Activated CD8-positive, alpha-beta T cell treated with anti-CD3 and anti-CD28 coated beads for 36 hours (primary cell): ENCODE measurements at regions of chr17 and their contacts with region 1.

Region 1: GRCh38 chr17:77451245-77451893 is 310.6 kb downstream of the SEC14L1 start:
- DNase-seq: peak; percentile 84
- ATAC-seq: peak; percentile 19
- H3K4me3 Mint-ChIP-seq: peak overlapping the region; percentile 84
- H3K27ac Mint-ChIP-seq: peak overlapping the region; percentile 96
- H3K4me1 Mint-ChIP-seq: peaks cover 30% of the 10 kb centered on the region
- H3K27me3 Mint-ChIP-seq: no peaks in the 10 kb centered on the region
- CTCF ChIP-seq: no peak

Region 2: GRCh38 chr17:77254951-77255825 is 196.2 kb before region 1 on chr17:
- CTCF ChIA-PET with region 1: no interaction called
- POLR2A ChIA-PET with region 1: no interaction called
- intact Hi-C with region 1: no loop called
- DNase-seq: no peak
- ATAC-seq: no peak
- H3K4me3 Mint-ChIP-seq: no peak overlapping the region
- H3K27ac Mint-ChIP-seq: no peak overlapping the region
- H3K4me1 Mint-ChIP-seq: no peaks in the 10 kb centered on the region
- H3K27me3 Mint-ChIP-seq: no peaks in the 10 kb centered on the region
- CTCF ChIP-seq: no peak

Region 3: DNA sequence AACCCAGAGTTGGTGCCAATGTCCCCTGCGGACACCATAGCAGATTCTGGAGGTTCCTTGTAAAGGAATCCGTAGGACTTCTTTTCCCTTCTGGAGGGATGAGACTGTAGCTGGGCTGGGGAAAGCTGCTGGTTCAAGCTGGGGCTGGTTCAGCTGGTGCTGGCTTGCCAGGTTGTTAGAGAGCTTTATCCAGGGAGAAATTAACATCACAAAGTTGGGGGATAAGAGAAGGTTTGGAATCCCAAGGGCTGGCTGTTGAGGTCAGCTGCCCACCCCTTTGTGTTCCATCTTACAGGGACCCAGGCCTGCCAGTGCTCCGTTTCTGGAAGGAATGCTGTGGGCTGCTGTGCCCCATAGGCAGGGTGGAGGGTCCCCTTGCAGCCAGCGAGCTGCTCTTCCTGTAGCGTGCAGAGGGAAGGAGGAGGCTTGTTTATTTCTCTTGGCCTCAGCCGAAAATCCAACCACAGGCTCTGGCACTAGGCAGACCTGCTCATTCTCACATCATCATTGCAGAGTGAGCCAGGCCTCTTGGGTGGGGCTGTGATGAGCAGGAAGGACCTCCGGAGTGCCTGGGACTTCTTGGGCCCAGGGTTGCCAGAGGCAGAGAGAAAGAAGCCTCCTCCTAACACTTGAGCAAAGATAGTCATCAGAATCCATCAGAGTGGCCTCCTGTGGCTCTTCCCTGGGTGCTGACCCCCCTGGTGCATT is 59.5 kb before region 1 on chr17:
- CTCF ChIA-PET with region 1: no interaction called
- POLR2A ChIA-PET with region 1: interaction called, 14 read pairs
- intact Hi-C with region 1: no loop called
- DNase-seq: peak; percentile 84
- ATAC-seq: peak; percentile 62
- H3K4me3 Mint-ChIP-seq: peak overlapping the region; percentile 81
- H3K27ac Mint-ChIP-seq: peak overlapping the region; percentile 85
- H3K4me1 Mint-ChIP-seq: peaks cover 68% of the 10 kb centered on the region
- H3K27me3 Mint-ChIP-seq: no peaks in the 10 kb centered on the region
- CTCF ChIP-seq: no peak

Region 4: GRCh38 chr17:77465358-77466041 is 14.1 kb after region 1 on chr17:
- CTCF ChIA-PET with region 1: no interaction called
- POLR2A ChIA-PET with region 1: interaction called, 110 read pairs
- intact Hi-C with region 1: no loop called
- DNase-seq: peak; percentile 91
- ATAC-seq: peak; percentile 81
- H3K4me3 Mint-ChIP-seq: peak overlapping the region; percentile 60
- H3K27ac Mint-ChIP-seq: peak overlapping the region; percentile 89
- H3K4me1 Mint-ChIP-seq: peaks cover 82% of the 10 kb centered on the region
- H3K27me3 Mint-ChIP-seq: no peaks in the 10 kb centered on the region
- CTCF ChIP-seq: no peak

Region 5: GRCh38 chr17:77476931-77477877 is 25.8 kb after region 1 on chr17:
- CTCF ChIA-PET with region 1: interaction called, 7 read pairs
- POLR2A ChIA-PET with region 1: interaction called, 110 read pairs
- intact Hi-C with region 1: no loop called
- DNase-seq: peak; percentile 62
- ATAC-seq: no peak
- H3K4me3 Mint-ChIP-seq: peak overlapping the region; percentile 28
- H3K27ac Mint-ChIP-seq: peak overlapping the region; percentile 53
- H3K4me1 Mint-ChIP-seq: peaks cover 81% of the 10 kb centered on the region
- H3K27me3 Mint-ChIP-seq: no peaks in the 10 kb centered on the region
- CTCF ChIP-seq: no peak

Region 6: GRCh38 chr17:77494664-77495435 is 43.5 kb after region 1 on chr17:
- CTCF ChIA-PET with region 1: interaction called, 34 read pairs
- POLR2A ChIA-PET with region 1: interaction called, 7 read pairs
- intact Hi-C with region 1: no loop called
- DNase-seq: peak; percentile 81
- ATAC-seq: peak; percentile 76
- H3K4me3 Mint-ChIP-seq: no peak overlapping the region
- H3K27ac Mint-ChIP-seq: peak overlapping the region; percentile 44
- H3K4me1 Mint-ChIP-seq: peaks cover 27% of the 10 kb centered on the region
- H3K27me3 Mint-ChIP-seq: no peaks in the 10 kb centered on the region
- CTCF ChIP-seq: peak; percentile 100